K562 (cell line): ENCODE measurements at regions of chr1 and their contacts with region 1.

Region 1: DNA sequence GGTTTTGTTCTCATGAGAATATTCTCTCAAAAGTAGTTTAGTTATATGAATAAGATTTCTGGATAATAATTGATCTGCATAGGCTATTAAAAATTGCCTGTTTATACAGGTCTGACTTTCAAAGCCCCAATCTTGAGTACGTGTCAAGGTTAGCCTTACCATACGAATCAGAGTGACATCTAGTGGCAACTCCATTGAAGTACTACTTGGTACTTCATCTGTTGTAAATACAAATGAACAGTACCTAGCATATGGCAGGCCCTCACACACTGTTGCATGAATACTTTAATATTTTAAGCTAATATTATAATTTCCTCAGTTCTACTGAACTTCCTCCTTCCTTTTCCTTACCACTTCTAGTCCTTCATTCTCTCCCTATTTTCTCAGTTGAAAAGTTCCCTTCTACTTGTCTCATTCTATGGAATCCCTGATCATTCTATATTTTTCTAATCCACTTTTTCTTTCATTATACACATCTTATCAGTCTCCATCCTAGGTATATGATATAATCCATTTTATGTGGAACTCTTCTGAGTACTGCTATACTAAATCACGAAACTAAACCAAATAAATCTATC is 101.2 kb downstream of the AKT3 start:
- DNase-seq: peak; percentile 54 to 70 (median 61)
- ATAC-seq: peak; percentile 97
- H3K4me3 ChIP-seq: no peak overlapping the region
- H3K27ac ChIP-seq: no peak overlapping the region
- H3K4me1 ChIP-seq: no peaks in the 10 kb centered on the region
- H3K27me3 ChIP-seq: no peaks in the 10 kb centered on the region
- CTCF ChIP-seq: peak; percentile 63 to 77 (median 70)
- EP300 ChIP-seq: no peak
- POLR2A ChIP-seq: no peak
- RAD21 ChIP-seq: peak; percentile 79 to 85

Region 2: GRCh38 chr1:243471754-243472745 is 276.7 kb before region 1 on chr1:
- CTCF ChIA-PET with region 1: interaction called, 7 read pairs
- POLR2A ChIA-PET with region 1: no interaction called
- in situ Hi-C with region 1: no loop called
- intact Hi-C with region 1: loop called (anchors 2 kb)
- DNase-seq: no peak
- ATAC-seq: peak; percentile 15; the same call in 1 of the 3 replicates
- H3K4me3 ChIP-seq: no peak overlapping the region
- H3K27ac ChIP-seq: no peak overlapping the region
- H3K4me1 ChIP-seq: peaks cover 6 to 15% of the 10 kb centered on the region in 2 experiments; a peak in 2 of 5 replicates
- H3K27me3 ChIP-seq: no peaks in the 10 kb centered on the region
- CTCF ChIP-seq: no peak
- EP300 ChIP-seq: no peak
- POLR2A ChIP-seq: no peak
- RAD21 ChIP-seq: no peak

Region 3: GRCh38 chr1:243550276-243550675 is 198.5 kb before region 1 on chr1:
- CTCF ChIA-PET with region 1: no interaction called
- POLR2A ChIA-PET with region 1: no interaction called
- in situ Hi-C with region 1: no loop called
- intact Hi-C with region 1: loop called (anchors 5 kb)
- DNase-seq: no peak
- ATAC-seq: no peak
- H3K4me3 ChIP-seq: no peak overlapping the region
- H3K27ac ChIP-seq: no peak overlapping the region
- H3K4me1 ChIP-seq: no peaks in the 10 kb centered on the region
- H3K27me3 ChIP-seq: no peaks in the 10 kb centered on the region
- CTCF ChIP-seq: no peak
- EP300 ChIP-seq: no peak
- POLR2A ChIP-seq: no peak
- RAD21 ChIP-seq: no peak

Region 4: DNA sequence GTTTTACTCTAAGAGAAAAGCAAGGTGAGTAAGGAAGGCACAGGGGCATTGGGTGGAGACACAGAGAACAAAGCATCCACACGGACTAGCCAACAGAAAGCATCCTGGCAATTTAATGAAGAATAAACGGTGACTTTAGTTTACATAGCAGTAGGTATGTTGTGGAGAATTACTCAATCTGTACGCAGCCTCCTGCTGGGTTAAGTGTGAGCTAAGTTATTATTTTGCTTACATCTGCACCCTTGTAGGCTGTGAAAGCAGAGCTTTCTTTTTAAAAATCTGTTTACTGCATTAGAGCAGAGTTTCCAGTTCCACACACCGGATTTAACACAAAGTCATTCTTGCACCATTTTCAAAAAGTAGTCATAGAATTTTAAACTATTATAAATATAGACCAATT is 43.2 kb before region 1 on chr1:
- CTCF ChIA-PET with region 1: no interaction called
- POLR2A ChIA-PET with region 1: no interaction called
- in situ Hi-C with region 1: no loop called
- intact Hi-C with region 1: no loop called
- DNase-seq: no peak
- ATAC-seq: no peak
- H3K4me3 ChIP-seq: no peak overlapping the region
- H3K27ac ChIP-seq: no peak overlapping the region
- H3K4me1 ChIP-seq: no peaks in the 10 kb centered on the region
- H3K27me3 ChIP-seq: no peaks in the 10 kb centered on the region
- CTCF ChIP-seq: no peak
- EP300 ChIP-seq: no peak
- POLR2A ChIP-seq: no peak
- RAD21 ChIP-seq: no peak

Region 5: DNA sequence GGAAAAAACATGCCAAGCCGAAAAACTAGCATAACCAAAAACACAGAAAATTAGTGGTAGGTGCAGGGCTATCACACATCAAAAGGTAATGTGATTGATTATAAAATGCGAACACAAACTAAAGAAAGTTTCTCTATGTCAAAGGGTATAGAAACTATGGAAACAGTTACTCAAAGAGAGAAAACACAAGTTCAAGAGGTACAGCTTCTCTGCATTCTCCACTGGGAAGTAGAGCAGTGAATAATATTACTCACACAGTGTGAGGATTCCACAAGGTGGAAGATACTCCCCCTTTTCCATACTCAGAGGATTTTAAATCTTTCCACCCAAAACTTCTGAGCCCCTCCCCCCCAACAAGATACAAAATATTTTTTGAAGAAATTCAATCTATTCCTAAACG is 82.7 kb after region 1 on chr1:
- CTCF ChIA-PET with region 1: no interaction called
- POLR2A ChIA-PET with region 1: no interaction called
- in situ Hi-C with region 1: no loop called
- intact Hi-C with region 1: no loop called
- DNase-seq: no peak
- ATAC-seq: no peak
- H3K4me3 ChIP-seq: no peak overlapping the region
- H3K27ac ChIP-seq: no peak overlapping the region
- H3K4me1 ChIP-seq: no peaks in the 10 kb centered on the region
- H3K27me3 ChIP-seq: no peaks in the 10 kb centered on the region
- CTCF ChIP-seq: no peak
- EP300 ChIP-seq: no peak
- POLR2A ChIP-seq: no peak
- RAD21 ChIP-seq: no peak